Activated CD8-positive, alpha-beta memory T cell treated with anti-CD3 and anti-CD28 coated beads, Interleukin-2, amount 10 ng/mL, durations not matched to agents 7 days and 5 days (primary cell): ENCODE measurements at regions of chr2 and their contacts with region 1.

Region 1: GRCh38 chr2:25991965-25992364 is 9.7 kb upstream of the KIF3C start:
- DNase-seq: no peak
- ATAC-seq: no peak
- H3K4me3 Mint-ChIP-seq: no peak overlapping the region
- H3K27ac Mint-ChIP-seq: no peak overlapping the region
- H3K4me1 Mint-ChIP-seq: peaks cover 27% of the 10 kb centered on the region
- H3K27me3 Mint-ChIP-seq: peaks cover 7% of the 10 kb centered on the region

Region 2: DNA sequence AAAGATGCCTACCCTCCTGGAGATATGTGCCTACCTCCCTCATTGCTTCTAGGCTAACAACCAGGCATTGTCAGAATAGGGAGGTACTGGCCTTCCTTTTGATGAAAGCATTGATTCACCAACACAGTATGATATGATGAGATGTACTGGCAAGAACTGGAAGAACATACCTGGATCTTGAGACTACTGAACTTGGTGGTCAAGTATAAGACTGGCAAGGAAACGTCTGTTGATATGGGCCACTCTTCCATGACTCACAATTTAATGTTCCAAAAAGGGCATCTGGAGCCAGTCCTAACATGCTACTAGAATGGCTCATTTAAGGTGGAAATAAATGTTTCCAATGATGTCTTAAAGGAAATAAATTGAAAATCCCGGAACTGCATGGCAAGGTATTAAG is 336.6 kb before region 1 on chr2:
- CTCF ChIA-PET with region 1: no interaction called
- DNase-seq: no peak
- ATAC-seq: no peak
- H3K4me3 Mint-ChIP-seq: no peak overlapping the region
- H3K27ac Mint-ChIP-seq: no peak overlapping the region
- H3K4me1 Mint-ChIP-seq: peaks cover 15% of the 10 kb centered on the region
- H3K27me3 Mint-ChIP-seq: no peaks in the 10 kb centered on the region

Region 3: DNA sequence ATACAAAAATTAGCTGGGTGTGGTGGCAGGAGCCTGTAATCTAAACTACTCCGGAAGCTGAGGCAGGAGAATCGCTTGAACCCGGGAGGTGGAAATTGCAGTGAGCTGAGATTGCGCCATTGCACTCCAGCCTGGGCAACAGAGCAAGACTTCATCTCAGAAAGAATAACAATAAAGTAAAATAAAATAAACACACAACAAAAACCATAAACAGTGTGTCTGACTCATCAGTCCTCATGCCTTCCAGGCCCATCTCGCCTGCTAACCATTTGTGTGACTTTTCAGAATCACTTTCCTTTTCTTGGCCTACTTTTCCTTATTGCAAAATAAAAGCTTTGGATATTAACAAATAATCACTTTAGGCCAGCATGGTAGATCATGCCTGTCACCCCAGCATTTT is 71.6 kb before region 1 on chr2:
- CTCF ChIA-PET with region 1: no interaction called
- DNase-seq: no peak
- ATAC-seq: no peak
- H3K4me3 Mint-ChIP-seq: no peak overlapping the region
- H3K27ac Mint-ChIP-seq: no peak overlapping the region
- H3K4me1 Mint-ChIP-seq: peaks cover 12% of the 10 kb centered on the region
- H3K27me3 Mint-ChIP-seq: peaks cover 6% of the 10 kb centered on the region

Region 4: GRCh38 chr2:25951071-25951547 is 40.9 kb before region 1 on chr2:
- CTCF ChIA-PET with region 1: interaction called, 26 read pairs
- DNase-seq: peak; percentile 79
- ATAC-seq: peak; percentile 95
- H3K4me3 Mint-ChIP-seq: no peak overlapping the region
- H3K27ac Mint-ChIP-seq: no peak overlapping the region
- H3K4me1 Mint-ChIP-seq: peaks cover 6% of the 10 kb centered on the region
- H3K27me3 Mint-ChIP-seq: no peaks in the 10 kb centered on the region

Region 5: GRCh38 chr2:26088032-26088643 is 96.2 kb after region 1 on chr2:
- CTCF ChIA-PET with region 1: interaction called, 14 read pairs
- DNase-seq: no peak
- ATAC-seq: peak; percentile 55
- H3K4me3 Mint-ChIP-seq: no peak overlapping the region
- H3K27ac Mint-ChIP-seq: no peak overlapping the region
- H3K4me1 Mint-ChIP-seq: peaks cover 47% of the 10 kb centered on the region
- H3K27me3 Mint-ChIP-seq: no peaks in the 10 kb centered on the region

Region 6: GRCh38 chr2:26144953-26145680 is 153.2 kb after region 1 on chr2:
- CTCF ChIA-PET with region 1: interaction called, 67 read pairs
- DNase-seq: peak; percentile 78
- ATAC-seq: peak; percentile 76
- H3K4me3 Mint-ChIP-seq: no peak overlapping the region
- H3K27ac Mint-ChIP-seq: no peak overlapping the region
- H3K4me1 Mint-ChIP-seq: peaks cover 2% of the 10 kb centered on the region
- H3K27me3 Mint-ChIP-seq: peaks cover 13% of the 10 kb centered on the region